ENCODE measurements at regions of chr11 and their contacts with region 1.

Region 1: DNA sequence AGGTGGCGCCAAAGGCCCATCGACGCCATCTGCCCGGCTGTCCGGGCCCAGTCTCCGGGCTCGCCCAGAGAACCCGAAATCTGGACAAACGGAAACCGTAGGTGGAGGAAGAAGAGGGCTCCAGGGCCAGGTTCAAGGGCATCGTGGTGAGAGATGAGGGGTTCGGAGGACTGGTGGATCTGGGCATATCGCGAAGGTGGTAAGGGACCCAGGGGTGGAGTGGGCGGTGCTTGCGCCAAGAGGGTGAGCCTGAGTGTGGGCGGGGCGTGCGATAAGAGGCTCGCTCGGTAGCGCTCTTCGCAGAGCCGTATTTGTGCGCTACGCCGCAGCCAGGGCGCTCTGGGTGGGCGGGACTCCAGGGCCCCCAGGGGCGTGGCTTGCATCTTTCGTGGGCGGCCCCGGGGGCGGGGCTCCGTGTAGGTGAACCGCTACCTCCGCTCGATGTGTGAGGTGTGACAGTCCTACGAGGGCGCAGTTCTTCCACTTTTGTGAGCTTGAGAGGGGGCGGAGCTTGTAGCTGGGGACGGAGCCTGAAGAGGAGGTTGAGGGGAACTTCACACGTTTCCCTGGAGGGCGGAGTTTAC is 4.8 kb downstream of the CD248 start:
- DNase-seq: peak; percentile 98
- H3K4me3 Mint-ChIP-seq: peak overlapping the region; percentile 87
- H3K27ac Mint-ChIP-seq: peak overlapping the region; percentile 99
- H3K4me1 Mint-ChIP-seq: peaks cover 36% of the 10 kb centered on the region
- H3K27me3 Mint-ChIP-seq: peaks cover 3% of the 10 kb centered on the region

Region 2: DNA sequence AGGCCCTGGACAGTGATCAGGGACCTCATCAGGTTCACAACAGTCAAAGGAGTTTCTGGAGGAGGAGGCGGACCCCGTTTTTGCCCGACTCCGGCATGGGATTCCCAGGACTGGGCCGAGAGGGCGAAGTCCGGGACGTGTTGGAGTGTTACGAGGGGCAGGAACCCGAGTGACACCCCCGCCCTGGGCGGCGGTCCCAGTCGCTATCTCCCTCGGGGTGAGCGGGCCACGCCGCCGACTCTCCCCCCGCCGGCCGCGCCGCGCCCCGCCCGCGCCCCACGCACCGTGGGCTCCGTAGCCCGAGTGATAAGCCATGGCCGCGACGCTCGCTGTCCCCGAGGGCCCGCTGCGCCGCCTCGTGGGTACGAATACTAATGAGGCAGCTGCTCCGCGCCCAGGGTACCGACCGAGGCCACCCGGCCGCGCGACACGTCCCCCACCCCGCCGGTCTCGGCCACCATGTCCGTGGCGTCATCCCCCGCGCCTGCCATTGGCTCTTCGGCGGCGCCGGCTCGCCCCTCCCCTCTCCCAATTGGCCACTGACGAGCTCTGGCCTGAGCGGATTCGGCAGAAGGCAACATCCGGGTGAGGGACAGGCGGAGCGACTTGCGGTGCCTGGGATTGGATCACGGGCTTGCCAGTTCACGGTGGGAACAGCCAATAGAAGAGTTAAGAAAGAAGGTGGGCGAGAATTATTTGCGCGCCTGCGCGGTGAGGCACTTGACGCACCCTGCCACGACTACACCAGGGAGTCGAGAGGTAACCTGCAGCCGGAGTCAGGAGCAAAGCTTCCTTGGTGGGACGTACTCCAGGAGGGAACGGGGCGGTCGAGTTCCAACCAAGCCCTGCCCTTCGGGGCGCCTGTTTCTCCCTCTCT is 23.1 kb before region 1 on chr11 and contains the start of gene YIF1A:
- CTCF ChIA-PET with region 1: interaction called, 11 read pairs
- POLR2A ChIA-PET with region 1: no interaction called
- DNase-seq: peak; percentile 99
- H3K4me3 Mint-ChIP-seq: peak within 1 kb of the TSS; percentile 89
- H3K27ac Mint-ChIP-seq: peak within 1 kb of the TSS; percentile 89
- H3K4me1 Mint-ChIP-seq: peaks cover 38% of the 10 kb centered on the region
- H3K27me3 Mint-ChIP-seq: peaks cover 25% of the 10 kb centered on the region
- total RNA-seq, gene YIF1A: 39.1 to 45.4 TPM

Region 3: DNA sequence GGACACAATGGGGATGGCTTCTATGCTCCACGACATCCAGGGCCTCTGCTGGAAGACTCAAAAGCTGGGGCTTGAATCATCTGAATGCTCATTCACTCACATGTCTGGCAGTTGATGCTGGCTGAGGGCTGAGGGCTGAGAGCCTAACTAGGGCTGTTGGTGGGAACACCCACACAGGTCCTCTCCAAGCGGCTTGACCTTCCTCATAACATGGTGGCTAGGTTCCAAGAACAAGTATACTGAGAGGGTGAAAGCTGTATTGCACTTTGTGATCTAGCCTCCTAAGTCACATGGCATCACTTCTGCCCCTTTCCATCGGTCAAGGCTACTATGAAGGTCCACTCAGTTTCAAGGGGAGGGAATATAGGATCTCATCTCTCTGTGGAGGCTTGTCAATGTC is 12.9 kb before region 1 on chr11:
- CTCF ChIA-PET with region 1: interaction called, 12 read pairs
- POLR2A ChIA-PET with region 1: no interaction called
- DNase-seq: no peak
- H3K4me3 Mint-ChIP-seq: no peak overlapping the region
- H3K27ac Mint-ChIP-seq: no peak overlapping the region
- H3K4me1 Mint-ChIP-seq: no peaks in the 10 kb centered on the region
- H3K27me3 Mint-ChIP-seq: no peaks in the 10 kb centered on the region

Region 4: DNA sequence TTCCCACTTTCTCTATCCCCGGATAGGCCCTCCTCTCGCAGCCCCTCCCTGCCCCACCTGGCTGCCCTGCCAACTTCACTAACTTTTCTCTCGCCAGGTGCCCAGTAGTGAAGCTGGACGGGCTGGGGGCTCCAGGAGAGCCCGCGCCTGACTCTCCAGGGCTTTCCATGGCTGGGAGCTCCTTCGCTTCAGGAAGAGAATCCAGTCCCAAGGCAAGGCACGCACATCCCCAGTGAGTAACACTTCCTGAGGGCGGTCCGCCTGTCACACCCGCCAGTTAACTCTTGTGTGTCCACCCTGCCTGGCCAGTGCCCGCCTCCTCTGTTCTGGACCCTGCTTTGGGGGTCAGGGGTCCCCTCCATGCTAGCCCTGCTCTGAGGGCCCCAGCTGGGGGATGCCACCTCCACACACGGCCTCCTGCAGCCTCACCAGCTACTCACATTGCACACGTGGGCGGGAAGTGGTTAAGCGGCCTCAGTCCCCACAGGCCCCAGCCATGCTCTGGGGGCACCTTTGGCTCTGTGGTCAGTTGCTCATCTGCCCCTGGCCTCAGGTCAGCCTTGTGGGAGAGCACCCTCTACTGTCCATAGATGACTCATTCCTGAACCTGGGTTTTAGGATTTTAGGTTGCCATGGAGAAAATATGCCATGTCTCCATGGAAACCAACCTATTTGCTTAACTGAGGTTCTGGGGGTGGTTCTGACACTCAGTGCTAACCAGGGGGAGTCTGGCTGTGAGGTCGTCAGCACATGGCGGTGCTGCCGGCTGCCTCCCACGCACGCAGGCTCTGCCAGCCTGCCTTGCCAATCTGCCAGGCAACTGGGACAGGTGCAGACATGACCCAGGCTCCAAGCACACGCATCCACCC is 24.4 kb after region 1 on chr11 and contains the start of gene RIN1:
- CTCF ChIA-PET with region 1: interaction called, 17 read pairs
- POLR2A ChIA-PET with region 1: no interaction called
- DNase-seq: peak; percentile 49
- H3K4me3 Mint-ChIP-seq: peak within 1 kb of the TSS; percentile 27
- H3K27ac Mint-ChIP-seq: peak within 1 kb of the TSS; percentile 71
- H3K4me1 Mint-ChIP-seq: peaks cover 20% of the 10 kb centered on the region
- H3K27me3 Mint-ChIP-seq: no peaks in the 10 kb centered on the region
- total RNA-seq, gene RIN1: 1.1 to 1.6 TPM

Region 5: GRCh38 chr11:66386171-66387069 is 74.4 kb after region 1 on chr11:
- CTCF ChIA-PET with region 1: interaction called, 18 read pairs
- POLR2A ChIA-PET with region 1: no interaction called
- DNase-seq: peak; percentile 88
- H3K4me3 Mint-ChIP-seq: no peak overlapping the region
- H3K27ac Mint-ChIP-seq: no peak overlapping the region
- H3K4me1 Mint-ChIP-seq: peaks cover 10% of the 10 kb centered on the region
- H3K27me3 Mint-ChIP-seq: peaks cover 5% of the 10 kb centered on the region

Measured in activated CD4-positive, alpha-beta T cell treated with anti-CD3 and anti-CD28 coated beads, Interleukin-2, amount 10 ng/mL, durations not matched to agents 7 days and 5 days (primary cell).